Adrenal gland (tissue), 19 donors: ENCODE measurements at regions of chr1 and their contacts with region 1.

Region 1: GRCh38 chr1:3423245-3423829 is 31.1 kb upstream of the ARHGEF16 start:
- DNase-seq: peak in 1 of 7 donors; percentile 12
- H3K4me3 ChIP-seq: no peak overlapping the region
- H3K27ac ChIP-seq: no peak overlapping the region
- H3K4me1 ChIP-seq: no peaks in the 10 kb centered on the region
- H3K27me3 ChIP-seq: no peaks in the 10 kb centered on the region
- CTCF ChIP-seq: no peak
- POLR2A ChIP-seq: no peak

Region 2: DNA sequence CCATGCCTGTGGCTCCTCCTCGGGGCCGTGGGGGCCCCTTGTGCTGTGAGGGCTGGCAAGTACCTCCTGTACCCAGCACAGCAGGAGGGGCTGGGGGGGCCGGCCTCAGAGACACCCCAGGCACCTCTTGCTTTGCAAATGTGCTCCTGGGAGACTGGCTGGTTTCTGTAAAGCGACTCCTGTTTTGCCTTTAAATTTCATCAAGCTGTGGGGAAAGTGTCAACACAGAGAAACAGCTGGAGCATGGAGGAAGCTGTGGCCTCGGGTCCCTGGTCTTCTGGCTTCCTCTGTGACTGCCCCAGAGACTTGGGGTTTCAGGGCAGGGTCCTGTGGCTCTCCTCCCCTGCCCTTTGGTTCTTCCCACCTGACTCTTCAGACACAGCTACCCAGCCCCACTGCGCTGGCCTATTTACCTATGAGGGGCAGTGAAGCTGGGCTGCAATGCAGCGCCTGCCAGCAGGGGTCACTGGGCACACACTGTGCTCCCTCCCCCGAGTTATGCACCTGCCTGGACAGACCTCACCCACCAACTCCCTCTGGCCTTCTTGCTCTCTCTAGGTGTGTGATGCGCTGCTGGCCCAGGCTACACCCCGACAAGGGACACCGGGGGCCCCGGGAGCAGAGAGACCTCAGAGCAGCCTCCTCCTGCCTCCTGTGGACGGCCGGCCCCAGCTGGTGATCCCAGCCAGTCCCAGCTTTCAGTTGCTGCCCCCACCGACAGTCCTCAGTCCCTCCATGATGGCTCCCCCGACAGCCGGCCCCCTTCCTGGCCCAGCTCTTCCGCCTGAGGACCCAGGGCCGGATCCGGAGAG is 993.4 kb before region 1 on chr1:
- intact Hi-C with region 1: loop called in 1 of 2 experiments (anchors 10 kb)
- DNase-seq: no peak
- H3K4me3 ChIP-seq: no peak overlapping the region
- H3K27ac ChIP-seq: no peak overlapping the region
- H3K4me1 ChIP-seq: no peaks in the 10 kb centered on the region
- H3K27me3 ChIP-seq: peaks cover 24% of the 10 kb centered on the region
- CTCF ChIP-seq: peak in 2 of 6 experiments; percentile 28 to 36
- POLR2A ChIP-seq: no peak

Region 3: GRCh38 chr1:2821966-2822620 is 601.2 kb before region 1 on chr1:
- intact Hi-C with region 1: loop called in 1 of 2 experiments (anchors 10 kb)
- DNase-seq: peak; percentile 29 to 57 (median 39)
- H3K4me3 ChIP-seq: no peak overlapping the region
- H3K27ac ChIP-seq: no peak overlapping the region
- H3K4me1 ChIP-seq: no peaks in the 10 kb centered on the region
- H3K27me3 ChIP-seq: peaks cover 13% of the 10 kb centered on the region
- CTCF ChIP-seq: peak; percentile 30 to 65 (median 48)
- POLR2A ChIP-seq: no peak